ENCODE measurements at regions of chr2 and their contacts with region 1.

Region 1: GRCh38 chr2:55049043-55049793 is 1.0 kb downstream of the RTN4 start:
- DNase-seq: peak; percentile 93
- ATAC-seq: peak; percentile 78
- H3K4me3 ChIP-seq: peak overlapping the region; percentile 91
- H3K27ac ChIP-seq: peak overlapping the region; percentile 95
- H3K4me1 ChIP-seq: peaks cover 35% of the 10 kb centered on the region
- H3K27me3 ChIP-seq: no peaks in the 10 kb centered on the region
- CTCF ChIP-seq: peak; percentile 54

Region 2: DNA sequence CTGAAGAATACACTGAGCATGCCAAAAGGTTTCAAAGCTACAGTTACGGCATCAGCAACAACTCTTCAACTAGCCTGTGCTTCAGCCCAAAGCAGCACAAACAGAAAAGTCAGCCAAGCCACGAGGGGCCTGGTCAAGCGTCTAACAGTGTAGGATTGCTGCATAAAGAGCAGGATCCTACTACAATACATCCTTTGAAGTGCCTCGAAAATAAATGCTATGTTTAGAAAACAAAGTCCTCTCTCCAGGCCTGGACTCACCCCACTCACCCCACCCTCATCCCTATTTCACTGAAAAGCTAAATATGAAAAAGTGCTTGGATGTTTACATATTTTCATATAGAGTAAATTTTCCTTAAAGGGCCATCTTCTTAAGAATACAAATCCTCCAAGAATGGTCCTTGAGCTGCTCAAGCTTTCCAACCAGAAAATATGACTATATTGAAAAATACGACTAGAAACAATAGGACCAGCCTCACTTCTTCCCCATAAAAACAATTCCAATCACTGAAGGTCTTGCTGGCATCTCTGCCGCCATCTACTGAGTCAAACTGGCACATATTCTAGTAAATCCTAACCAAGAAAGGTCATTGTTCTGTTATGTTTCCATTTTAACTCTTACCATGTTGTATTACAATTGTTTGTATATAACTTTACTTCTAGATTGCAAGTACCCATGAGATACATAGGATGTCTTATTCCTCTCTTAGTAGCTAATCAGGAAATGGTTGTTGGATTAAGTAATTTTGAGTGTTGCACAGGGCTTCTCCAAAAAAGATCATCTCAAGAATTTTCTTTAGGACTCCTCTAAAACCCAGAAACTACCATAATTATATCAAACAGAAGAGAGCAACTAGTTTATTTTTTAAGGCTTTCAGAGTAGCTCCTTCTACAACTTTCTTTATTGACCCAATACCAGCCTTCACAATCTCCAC is 119.3 kb after region 1 on chr2:
- intact Hi-C with region 1: loop called (anchors 10 kb)
- DNase-seq: no peak
- ATAC-seq: peak; percentile 75
- H3K4me3 ChIP-seq: no peak overlapping the region
- H3K27ac ChIP-seq: peak overlapping the region; percentile 53
- H3K4me1 ChIP-seq: peaks cover 32% of the 10 kb centered on the region
- H3K27me3 ChIP-seq: no peaks in the 10 kb centered on the region
- CTCF ChIP-seq: peak; percentile 84